Spleen (tissue), 13 donors: ENCODE measurements at regions of chr3 and their contacts with region 1.

Region 1: GRCh38 chr3:72821161-72821781 is 27.0 kb downstream of the SHQ1 start:
- DNase-seq: no peak
- H3K4me3 ChIP-seq: no peak overlapping the region
- H3K27ac ChIP-seq: peak overlapping the region in 4 of 8 donors; percentile 3 to 38 (median 33)
- H3K4me1 ChIP-seq: peaks cover 27 to 59% (median 34%) of the 10 kb centered on the region in 6 donors
- H3K27me3 ChIP-seq: no peaks in the 10 kb centered on the region
- CTCF ChIP-seq: no peak
- POLR2A ChIP-seq: no peak

Region 2: DNA sequence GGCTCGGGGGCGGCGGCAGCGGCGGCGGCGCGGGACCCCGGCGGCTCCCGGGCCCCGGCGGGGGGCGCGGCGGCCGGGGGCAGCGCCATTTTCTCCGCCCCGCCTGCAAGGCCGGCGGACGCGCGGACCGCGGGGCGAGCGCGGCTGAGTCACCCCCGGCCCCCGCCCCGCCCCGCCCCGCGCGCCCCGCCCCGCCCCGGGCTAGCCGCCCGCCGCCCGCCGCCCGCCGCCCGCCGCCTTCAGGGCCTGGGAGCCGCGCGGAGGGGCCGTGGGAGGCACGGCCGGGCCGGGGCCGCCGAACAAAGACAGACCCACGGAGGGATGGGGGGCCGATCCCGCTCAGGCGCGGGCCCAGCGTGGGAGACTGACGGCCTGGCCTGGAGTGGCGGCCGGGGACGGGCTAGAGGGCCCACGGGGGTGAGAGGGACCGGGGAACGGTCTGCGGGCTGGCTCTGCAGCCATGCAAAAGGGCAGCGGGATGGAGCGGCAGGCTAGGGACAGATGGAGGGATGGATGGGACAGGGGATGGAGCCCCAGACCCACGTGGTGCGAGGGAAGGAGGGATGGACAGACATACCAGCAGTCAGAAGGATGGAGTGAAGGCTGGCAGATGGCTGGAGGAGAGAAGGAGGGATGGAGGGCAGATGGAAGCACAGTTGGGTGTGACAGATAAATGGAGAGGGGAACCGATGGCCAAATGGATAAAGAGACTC is 1095.8 kb before region 1 on chr3 and contains the start of gene EIF4E3:
- intact Hi-C with region 1: loop called (anchors 5 kb)
- DNase-seq: peak; percentile 91
- H3K4me3 ChIP-seq: peak within 1 kb of the TSS; percentile 45 to 93 (median 78)
- H3K27ac ChIP-seq: peak within 1 kb of the TSS; percentile 57 to 96 (median 90)
- H3K4me1 ChIP-seq: peaks cover 9 to 79% (median 67%) of the 10 kb centered on the region in 6 donors
- H3K27me3 ChIP-seq: no peaks in the 10 kb centered on the region
- CTCF ChIP-seq: no peak
- POLR2A ChIP-seq: no peak
- total RNA-seq, gene EIF4E3: 35.1 to 52.3 (median 37.8) TPM

Region 3: GRCh38 chr3:71873093-71873611 is 948.1 kb before region 1 on chr3:
- intact Hi-C with region 1: loop called (anchors 5 kb)
- DNase-seq: no peak
- H3K4me3 ChIP-seq: no peak overlapping the region
- H3K27ac ChIP-seq: no peak overlapping the region
- H3K4me1 ChIP-seq: peaks cover 8 to 33% (median 15%) of the 10 kb centered on the region in 6 donors
- H3K27me3 ChIP-seq: peaks cover 0 to 14% (median 0%) of the 10 kb centered on the region in 7 donors
- CTCF ChIP-seq: no peak
- POLR2A ChIP-seq: no peak

Region 4: GRCh38 chr3:71955240-71956068 is 865.8 kb before region 1 on chr3:
- intact Hi-C with region 1: loop called (anchors 10 kb)
- DNase-seq: no peak
- H3K4me3 ChIP-seq: no peak overlapping the region
- H3K27ac ChIP-seq: no peak overlapping the region
- H3K4me1 ChIP-seq: peaks cover 7 to 18% (median 14%) of the 10 kb centered on the region in 6 donors
- H3K27me3 ChIP-seq: peaks cover 0 to 8% (median 0%) of the 10 kb centered on the region in 7 donors
- CTCF ChIP-seq: peak; percentile 50 to 77 (median 65)
- POLR2A ChIP-seq: no peak

Region 5: GRCh38 chr3:72661115-72661457 is 160.2 kb before region 1 on chr3:
- intact Hi-C with region 1: loop called (anchors 5 kb)
- DNase-seq: no peak
- H3K4me3 ChIP-seq: no peak overlapping the region
- H3K27ac ChIP-seq: no peak overlapping the region
- H3K4me1 ChIP-seq: no peaks in the 10 kb centered on the region
- H3K27me3 ChIP-seq: peaks cover 0 to 18% (median 3%) of the 10 kb centered on the region in 7 donors
- CTCF ChIP-seq: no peak
- POLR2A ChIP-seq: no peak